ENCODE measurements at regions of chr5 and their contacts with region 1.

Region 1: DNA sequence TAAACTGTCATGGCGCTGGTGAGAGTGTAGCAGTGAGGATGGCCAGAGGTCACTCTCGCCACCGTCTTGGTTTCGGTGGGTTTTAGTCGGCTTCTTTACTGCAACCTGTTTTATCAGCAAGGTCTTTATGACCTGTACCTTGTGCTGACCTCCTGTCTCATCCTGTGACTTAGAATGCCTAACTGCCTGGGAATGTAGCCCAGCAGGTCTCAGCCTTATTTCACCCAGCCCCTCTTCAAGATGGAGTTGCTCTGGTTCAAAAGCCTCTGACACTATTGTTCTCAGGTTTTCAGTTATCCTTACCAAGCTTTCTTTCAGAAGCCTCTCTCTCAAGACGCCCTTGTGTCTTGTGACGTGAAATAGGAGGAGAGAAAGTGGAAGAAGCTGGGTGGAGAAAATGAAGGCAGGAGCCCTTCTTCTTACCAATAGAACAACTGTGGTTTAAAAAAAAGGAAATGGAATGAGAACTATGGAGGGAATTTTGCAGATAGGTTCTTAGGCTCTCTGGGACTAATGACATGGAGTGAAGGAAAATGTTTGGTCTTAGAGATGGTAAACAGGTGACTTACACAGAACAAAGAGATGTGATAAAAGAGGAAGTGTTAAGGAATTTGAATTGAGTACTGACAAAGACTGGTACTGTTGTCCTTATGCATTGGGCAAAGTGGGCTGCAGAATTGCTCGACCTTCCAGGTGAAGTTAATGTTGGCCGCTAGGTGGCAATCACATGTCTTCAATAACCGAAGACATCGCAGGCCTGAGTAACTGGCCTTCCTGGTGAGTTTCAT is 133.3 kb upstream of the RAI14 start:
- DNase-seq: no peak
- H3K4me3 ChIP-seq: no peak overlapping the region
- H3K27ac ChIP-seq: peak overlapping the region in 2 of 4 donors; percentile 20 to 29
- H3K4me1 ChIP-seq: peaks cover 0 to 31% (median 3%) of the 10 kb centered on the region in 3 donors
- H3K27me3 ChIP-seq: no peaks in the 10 kb centered on the region
- CTCF ChIP-seq: peak; percentile 46 to 79 (median 74)
- POLR2A ChIP-seq: no peak

Region 2: DNA sequence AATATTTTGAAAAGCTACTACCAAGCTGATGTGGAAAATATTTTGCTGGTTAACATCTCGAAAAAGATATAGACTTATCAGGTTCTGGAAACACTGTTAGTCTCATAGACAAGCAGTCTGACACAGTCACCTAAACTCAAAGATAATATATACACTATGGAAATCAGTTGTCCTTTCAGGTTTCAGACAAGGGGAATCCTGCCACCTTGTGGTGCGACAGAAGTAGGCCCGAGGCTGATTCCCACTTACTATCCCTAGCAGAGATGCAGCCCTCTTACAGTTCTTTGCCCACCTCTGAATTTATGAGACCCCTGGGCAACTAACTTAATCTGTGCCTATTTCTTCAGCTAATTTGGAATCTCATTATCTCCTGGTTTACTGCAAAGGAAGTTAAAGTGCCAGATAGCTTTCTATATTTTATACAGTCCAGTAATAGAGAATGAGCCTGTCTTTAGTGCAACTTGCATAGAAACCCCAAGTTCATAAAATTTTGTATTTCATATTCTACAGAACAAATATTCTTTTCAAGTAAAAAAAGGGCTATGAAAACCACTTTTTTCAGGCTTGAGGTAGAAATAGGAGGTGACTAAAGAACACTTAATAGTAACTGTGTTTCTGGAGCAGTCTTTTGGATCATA is 375.6 kb after region 1 on chr5:
- intact Hi-C with region 1: loop called (anchors 10 kb)
- DNase-seq: no peak
- H3K4me3 ChIP-seq: no peak overlapping the region
- H3K27ac ChIP-seq: no peak overlapping the region
- H3K4me1 ChIP-seq: peaks cover 0 to 5% (median 0%) of the 10 kb centered on the region in 3 donors
- H3K27me3 ChIP-seq: no peaks in the 10 kb centered on the region
- CTCF ChIP-seq: peak; percentile 57 to 86 (median 82)
- POLR2A ChIP-seq: no peak

Measured in esophagus squamous epithelium (tissue), 5 donors.